ENCODE measurements at regions of chr6 and their contacts with region 1.

Region 1: DNA sequence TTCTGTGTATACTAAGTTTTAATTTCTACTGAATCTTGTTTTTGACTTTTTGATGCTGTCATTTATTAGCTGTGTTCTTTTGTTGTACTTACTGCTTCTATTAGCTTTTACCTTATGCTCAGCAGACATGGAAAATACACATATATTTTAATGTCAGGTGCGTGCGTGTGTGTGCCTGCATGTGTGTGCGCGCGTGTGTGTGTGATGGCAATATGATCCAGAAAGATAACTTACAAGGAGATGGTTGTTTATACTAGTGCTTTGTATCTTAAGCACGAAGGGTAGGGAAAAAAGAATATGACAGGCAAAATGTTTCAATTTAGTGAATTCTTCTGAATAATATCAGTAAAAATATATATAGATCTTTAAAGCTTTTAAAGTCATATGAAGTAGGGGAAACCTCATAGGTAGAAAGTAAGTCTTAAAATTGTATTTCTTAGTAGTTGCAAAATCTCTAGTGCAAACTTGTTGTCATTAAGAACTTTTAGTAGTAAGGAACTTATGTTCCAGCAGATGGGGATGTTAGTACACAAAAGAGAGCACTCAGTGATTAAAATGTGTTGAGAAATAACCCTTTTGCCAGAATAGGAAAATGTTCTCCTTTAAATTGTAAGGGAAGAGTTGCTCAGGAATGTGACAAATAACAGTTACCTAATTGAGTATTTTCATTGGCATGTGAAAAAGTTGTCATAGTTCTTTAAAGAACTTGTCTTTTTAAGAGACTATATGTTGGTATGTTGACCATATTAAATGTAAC is 13.2 kb downstream of the QKI start:
- DNase-seq: no peak
- ATAC-seq: peak; percentile 82

Region 2: DNA sequence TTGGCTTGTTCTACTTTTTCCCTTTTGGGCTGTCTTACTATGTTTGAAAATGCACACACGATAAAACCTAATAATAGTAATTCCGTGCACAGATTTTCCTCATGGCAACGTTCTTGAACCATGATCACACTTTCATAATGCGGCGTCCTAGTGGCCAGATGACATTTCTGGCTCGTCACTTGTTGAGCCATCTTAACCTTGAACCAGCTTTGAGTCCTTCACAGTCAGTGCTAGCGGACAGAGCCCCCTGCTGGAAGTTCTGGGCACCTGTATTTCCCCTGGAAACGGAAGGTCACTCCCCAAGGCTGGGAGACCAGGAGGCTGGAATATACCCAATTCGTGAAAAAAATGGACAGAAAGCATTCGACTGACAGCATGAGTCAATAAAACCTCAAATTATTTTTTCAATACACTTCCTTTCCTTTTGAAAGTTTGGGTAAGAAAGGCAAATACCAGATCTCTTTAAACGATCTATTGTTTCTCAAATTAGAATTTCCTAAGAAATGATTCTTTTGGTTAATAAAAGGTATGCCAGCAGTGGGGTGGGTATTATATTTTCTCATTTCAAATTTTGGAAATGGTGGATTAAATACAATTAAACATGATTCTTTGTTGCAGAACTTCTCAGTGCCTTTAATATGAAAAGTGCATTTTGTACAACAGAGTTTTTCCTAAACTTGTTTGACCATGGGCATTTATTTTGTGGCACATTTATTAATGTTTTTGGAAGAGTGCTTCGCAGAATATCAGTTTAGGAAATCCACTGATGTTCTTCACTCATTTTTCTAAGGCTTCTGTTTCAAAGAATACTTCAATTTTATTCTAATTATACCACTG is 529.1 kb after region 1 on chr6:
- intact Hi-C with region 1: loop called (anchors 10 kb)
- DNase-seq: peak; percentile 86
- ATAC-seq: peak; percentile 91

Measured in sciatic nerve (tissue), 2 donors.